Heart left ventricle (tissue), 16 donors: ENCODE measurements at regions of chr22 and their contacts with region 1.

Region 1: DNA sequence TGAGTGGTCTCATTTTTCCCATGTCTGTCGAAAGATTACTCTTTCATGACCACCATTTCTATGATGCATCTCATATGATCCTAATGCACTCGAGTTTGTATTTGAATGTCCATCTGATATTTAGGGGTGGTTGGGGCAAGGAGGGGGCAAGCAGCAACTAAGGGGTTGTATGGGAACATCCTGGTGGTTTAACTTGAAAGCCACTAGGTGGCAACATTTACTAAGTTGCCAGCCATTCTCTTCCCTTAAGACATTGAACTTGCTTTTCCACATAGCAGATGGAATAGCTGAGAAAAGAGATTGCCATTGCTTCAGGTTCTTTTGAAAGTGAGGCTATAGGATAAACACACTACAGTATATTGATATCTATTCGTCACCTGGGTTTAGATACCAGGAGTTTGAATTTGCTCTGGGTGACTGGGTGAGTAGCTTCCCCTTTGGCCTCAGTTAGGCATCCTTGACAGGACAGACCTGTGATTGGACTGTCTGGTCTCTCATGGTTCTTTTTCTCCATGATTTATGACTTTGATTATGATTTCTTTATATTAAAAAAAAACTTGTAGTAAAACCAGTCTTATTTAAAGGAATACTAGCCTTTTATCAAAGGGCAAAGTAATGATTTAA is 32.4 kb downstream of the NF2 start:
- DNase-seq: no peak
- ATAC-seq: peak in 2 of 4 donors; percentile 43 to 67
- H3K4me3 ChIP-seq: no peak overlapping the region
- H3K27ac ChIP-seq: no peak overlapping the region
- H3K4me1 ChIP-seq: peaks cover 0 to 19% (median 6%) of the 10 kb centered on the region in 12 donors
- H3K27me3 ChIP-seq: no peaks in the 10 kb centered on the region
- CTCF ChIP-seq: peak; percentile 33 to 69 (median 50)
- POLR2A ChIP-seq: no peak

Region 2: DNA sequence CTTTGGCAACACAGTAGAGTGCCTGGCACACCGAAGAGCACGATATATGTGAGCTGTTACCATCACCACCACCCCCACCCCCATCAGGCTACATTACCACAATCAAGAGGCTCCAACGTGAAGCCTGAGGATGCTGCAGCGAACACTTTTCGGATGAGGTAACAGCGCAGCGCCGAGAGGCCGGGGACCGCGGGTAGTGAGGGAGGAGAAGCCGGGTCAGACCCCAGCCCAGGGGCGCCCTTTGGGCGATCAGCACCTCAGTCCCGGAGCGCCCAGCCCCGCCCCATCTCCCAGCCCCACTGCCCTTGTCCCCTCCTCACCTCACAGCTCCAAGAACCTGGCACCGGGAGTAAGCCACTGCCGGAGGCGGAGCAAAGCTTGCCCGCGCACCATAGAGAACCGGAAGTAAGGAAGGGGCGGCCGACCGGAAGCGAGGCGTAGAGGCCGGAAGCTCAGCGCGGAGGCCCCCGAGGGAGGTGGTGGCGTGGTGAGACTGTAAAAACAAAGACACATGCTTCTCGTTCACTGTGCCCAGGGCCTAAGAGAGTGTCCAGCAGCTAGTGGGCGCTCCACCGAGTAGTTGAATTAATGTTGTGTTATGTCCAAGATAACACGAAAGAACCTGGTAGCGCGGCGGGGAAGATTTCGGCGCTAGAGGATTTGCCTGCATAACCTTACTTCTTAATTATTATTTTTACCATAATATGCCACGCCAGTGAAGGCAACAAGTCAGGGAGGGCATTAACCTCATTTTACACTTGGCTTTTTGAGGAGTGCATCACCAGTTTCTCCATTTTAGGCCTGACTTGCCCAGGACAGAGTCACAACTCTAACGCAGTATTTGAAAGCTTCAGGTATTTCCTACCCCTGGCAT is 82.3 kb before region 1 on chr22 and contains the start of gene THOC5:
- intact Hi-C with region 1: no loop called
- DNase-seq: peak; percentile 93 to 96 (median 96)
- ATAC-seq: peak; percentile 98 to 99 (median 99)
- H3K4me3 ChIP-seq: peak within 1 kb of the TSS; percentile 61 to 86 (median 77)
- H3K27ac ChIP-seq: peak within 1 kb of the TSS; percentile 34 to 89 (median 84)
- H3K4me1 ChIP-seq: peaks cover 3 to 16% (median 10%) of the 10 kb centered on the region in 12 donors
- H3K27me3 ChIP-seq: no peaks in the 10 kb centered on the region
- CTCF ChIP-seq: peak; percentile 54 to 93 (median 72)
- POLR2A ChIP-seq: no peak
- total RNA-seq, gene THOC5: 33.8 to 88.7 (median 40.6) TPM

Region 3: GRCh38 chr22:29570456-29570855 is 65.4 kb before region 1 on chr22:
- intact Hi-C with region 1: loop called in 1 of 10 experiments (anchors 10 kb)
- DNase-seq: no peak
- ATAC-seq: peak in 2 of 4 donors; percentile 18 to 27
- H3K4me3 ChIP-seq: no peak overlapping the region
- H3K27ac ChIP-seq: no peak overlapping the region
- H3K4me1 ChIP-seq: no peaks in the 10 kb centered on the region
- H3K27me3 ChIP-seq: no peaks in the 10 kb centered on the region
- CTCF ChIP-seq: no peak
- POLR2A ChIP-seq: no peak

Region 4: GRCh38 chr22:29979777-29980321 is 344.0 kb after region 1 on chr22:
- intact Hi-C with region 1: no loop called
- DNase-seq: no peak
- ATAC-seq: peak in 1 of 4 donors; percentile 15
- H3K4me3 ChIP-seq: no peak overlapping the region
- H3K27ac ChIP-seq: no peak overlapping the region
- H3K4me1 ChIP-seq: peaks cover 0 to 20% (median 12%) of the 10 kb centered on the region in 12 donors
- H3K27me3 ChIP-seq: no peaks in the 10 kb centered on the region
- CTCF ChIP-seq: no peak
- POLR2A ChIP-seq: no peak

Region 5: GRCh38 chr22:30079952-30080533 is 444.2 kb after region 1 on chr22 and contains the start of gene HORMAD2:
- intact Hi-C with region 1: loop called in 7 of 10 experiments (anchors 5 to 10 kb)
- DNase-seq: no peak
- ATAC-seq: no peak
- H3K4me3 ChIP-seq: peak within 1 kb of the TSS in 10 of 12 donors; percentile 5 to 42 (median 24)
- H3K27ac ChIP-seq: no peak within 1 kb of the TSS
- H3K4me1 ChIP-seq: peaks cover 0 to 8% (median 0%) of the 10 kb centered on the region in 12 donors
- H3K27me3 ChIP-seq: peaks cover 4 to 44% (median 11%) of the 10 kb centered on the region in 9 donors
- CTCF ChIP-seq: no peak
- POLR2A ChIP-seq: no peak
- total RNA-seq, gene HORMAD2: not detected

Region 6: GRCh38 chr22:30089655-30089974 is 453.8 kb after region 1 on chr22:
- intact Hi-C with region 1: loop called (anchors 2 to 10 kb)
- DNase-seq: no peak
- ATAC-seq: no peak
- H3K4me3 ChIP-seq: no peak overlapping the region
- H3K27ac ChIP-seq: no peak overlapping the region
- H3K4me1 ChIP-seq: peaks cover 0 to 7% (median 0%) of the 10 kb centered on the region in 12 donors
- H3K27me3 ChIP-seq: peaks cover 0 to 18% (median 0%) of the 10 kb centered on the region in 9 donors
- CTCF ChIP-seq: no peak
- POLR2A ChIP-seq: no peak

Region 7: GRCh38 chr22:30094804-30095203 is 459.0 kb after region 1 on chr22:
- intact Hi-C with region 1: loop called in 1 of 10 experiments (anchors 5 kb)
- DNase-seq: no peak
- ATAC-seq: no peak
- H3K4me3 ChIP-seq: no peak overlapping the region
- H3K27ac ChIP-seq: no peak overlapping the region
- H3K4me1 ChIP-seq: no peaks in the 10 kb centered on the region
- H3K27me3 ChIP-seq: peaks cover 0 to 45% (median 0%) of the 10 kb centered on the region in 9 donors
- CTCF ChIP-seq: no peak
- POLR2A ChIP-seq: no peak